Posterior cingulate gyrus (tissue), 11 donors: ENCODE measurements at regions of chr7 and their contacts with region 1.

Region 1: DNA sequence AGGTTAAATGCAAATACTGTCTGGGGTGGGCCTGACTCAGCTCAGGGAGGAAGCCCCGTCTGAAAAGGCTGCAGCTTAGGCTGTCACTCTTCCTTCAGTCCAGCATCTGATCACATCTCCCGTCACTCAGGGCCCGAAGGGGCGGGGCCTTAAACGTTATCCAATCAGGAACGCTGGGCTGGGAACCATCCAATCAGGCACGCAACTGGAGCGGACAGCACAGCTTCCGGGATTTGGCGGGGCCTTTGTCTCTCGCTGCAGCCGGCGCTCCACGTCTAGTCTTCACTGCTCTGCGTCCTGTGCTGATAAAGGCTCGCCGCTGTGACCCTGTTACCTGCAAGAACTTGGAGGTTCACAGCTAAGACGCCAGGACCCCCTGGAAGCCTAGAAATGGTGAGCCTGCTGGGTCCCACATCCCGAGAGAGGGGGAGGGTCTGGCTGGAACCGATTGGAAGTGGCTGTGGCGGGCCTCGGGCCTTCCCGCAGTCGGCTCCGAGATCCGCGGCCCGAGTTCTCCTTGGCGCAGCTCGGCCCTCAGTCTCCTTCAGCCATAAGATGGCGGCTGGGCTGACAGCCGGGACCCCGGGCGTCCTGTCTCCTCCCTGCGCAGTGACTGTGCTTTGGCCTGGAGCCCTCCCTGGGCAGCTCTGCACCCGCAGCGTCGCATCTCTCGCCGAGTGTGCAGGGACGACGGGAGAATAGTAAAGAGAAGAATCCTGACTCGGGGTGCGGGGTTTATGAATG is at the start of gene ZNF92:
- DNase-seq: peak; percentile 93 to 99 (median 98)

Region 2: GRCh38 chr7:64313740-64314491 is 1059.9 kb before region 1 on chr7 and contains the start of gene ZNF736:
- intact Hi-C with region 1: loop called (anchors 10 kb)
- DNase-seq: peak; percentile 85 to 99 (median 94)

Region 3: GRCh38 chr7:65265933-65266519 is 107.8 kb before region 1 on chr7:
- intact Hi-C with region 1: no loop called
- DNase-seq: peak in 1 of 10 donors; percentile 60

Region 4: DNA sequence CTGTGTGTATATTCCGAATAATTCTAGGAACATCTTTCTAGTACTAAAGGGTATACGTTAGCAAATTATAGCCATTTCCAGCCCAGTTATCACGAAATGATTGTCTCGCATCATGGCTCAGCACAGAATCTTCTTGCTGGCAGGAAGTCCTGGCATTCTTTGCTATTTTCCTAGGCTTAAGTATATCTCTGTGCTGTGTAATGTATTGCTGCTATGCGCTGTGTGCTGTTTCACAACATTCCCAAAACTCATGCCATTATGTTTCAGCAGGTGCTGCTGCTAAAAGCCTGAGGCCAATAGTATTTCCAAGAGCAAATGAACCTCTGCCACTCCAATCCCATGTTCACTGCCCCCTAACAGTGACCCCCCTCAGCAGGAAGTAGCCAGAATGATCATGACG is 63.0 kb before region 1 on chr7:
- intact Hi-C with region 1: loop called (anchors 10 kb)
- DNase-seq: no peak

Region 5: GRCh38 chr7:65471587-65471986 is 97.8 kb after region 1 on chr7:
- intact Hi-C with region 1: no loop called
- DNase-seq: no peak